ENCODE measurements at regions of chrX and their contacts with region 1.

Region 1: GRCh38 chrX:119067023-119067739 is 5.6 kb upstream of the CT47C1 start:
- DNase-seq: peak; percentile 42 to 71 (median 64)
- H3K4me3 ChIP-seq: no peak overlapping the region
- H3K27ac ChIP-seq: no peak overlapping the region
- H3K4me1 ChIP-seq: no peaks in the 10 kb centered on the region
- H3K27me3 ChIP-seq: no peaks in the 10 kb centered on the region
- CTCF ChIP-seq: peak; percentile 16 to 59 (median 42)
- EP300 ChIP-seq: no peak
- POLR2A ChIP-seq: no peak

Region 2: GRCh38 chrX:118614150-118614549 is 453.0 kb before region 1 on chrX:
- intact Hi-C with region 1: no loop called
- DNase-seq: no peak
- H3K4me3 ChIP-seq: no peak overlapping the region
- H3K27ac ChIP-seq: no peak overlapping the region
- H3K4me1 ChIP-seq: no peaks in the 10 kb centered on the region
- H3K27me3 ChIP-seq: no peaks in the 10 kb centered on the region
- CTCF ChIP-seq: no peak
- EP300 ChIP-seq: no peak
- POLR2A ChIP-seq: no peak

Region 3: GRCh38 chrX:118847676-118848075 is 219.5 kb before region 1 on chrX:
- intact Hi-C with region 1: loop called (anchors 5 to 10 kb)
- DNase-seq: no peak
- H3K4me3 ChIP-seq: no peak overlapping the region
- H3K27ac ChIP-seq: no peak overlapping the region
- H3K4me1 ChIP-seq: no peaks in the 10 kb centered on the region
- H3K27me3 ChIP-seq: no peaks in the 10 kb centered on the region
- CTCF ChIP-seq: peak in 2 of 3 donors; percentile 29 to 49
- EP300 ChIP-seq: no peak
- POLR2A ChIP-seq: no peak

Region 4: GRCh38 chrX:119004920-119005524 is 62.2 kb before region 1 on chrX:
- intact Hi-C with region 1: loop called in 1 of 4 experiments (anchors 10 kb)
- DNase-seq: peak; percentile 36 to 69 (median 56)
- H3K4me3 ChIP-seq: no peak overlapping the region
- H3K27ac ChIP-seq: no peak overlapping the region
- H3K4me1 ChIP-seq: no peaks in the 10 kb centered on the region
- H3K27me3 ChIP-seq: no peaks in the 10 kb centered on the region
- CTCF ChIP-seq: peak; percentile 52 to 71 (median 57)
- EP300 ChIP-seq: no peak
- POLR2A ChIP-seq: no peak

Region 5: DNA sequence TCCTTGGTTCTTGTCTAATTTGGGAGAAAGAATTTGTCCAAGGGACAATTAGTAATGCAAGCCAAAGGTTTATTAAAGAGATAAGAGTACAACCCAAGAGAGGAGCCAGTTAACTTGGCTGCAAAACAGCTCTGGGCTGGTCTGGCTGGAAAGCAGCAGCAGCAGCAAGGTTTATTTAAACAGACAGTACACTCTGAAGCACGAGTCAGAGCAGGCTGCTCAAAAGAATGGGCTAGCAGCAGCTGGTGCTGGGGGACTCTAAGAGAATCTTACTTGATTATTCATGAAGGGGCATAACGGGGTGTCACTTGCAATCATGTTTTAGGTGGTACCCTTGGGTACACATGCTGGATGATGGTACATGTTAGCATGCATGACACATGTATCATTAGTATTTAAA is 11.5 kb before region 1 on chrX:
- intact Hi-C with region 1: loop called in 1 of 4 experiments (anchors 1 kb)
- DNase-seq: no peak
- H3K4me3 ChIP-seq: no peak overlapping the region
- H3K27ac ChIP-seq: no peak overlapping the region
- H3K4me1 ChIP-seq: no peaks in the 10 kb centered on the region
- H3K27me3 ChIP-seq: no peaks in the 10 kb centered on the region
- CTCF ChIP-seq: no peak
- EP300 ChIP-seq: no peak
- POLR2A ChIP-seq: no peak

Measured in ovary (tissue), 10 donors.